ENCODE measurements at regions of chr3 and their contacts with region 1.

Region 1: DNA sequence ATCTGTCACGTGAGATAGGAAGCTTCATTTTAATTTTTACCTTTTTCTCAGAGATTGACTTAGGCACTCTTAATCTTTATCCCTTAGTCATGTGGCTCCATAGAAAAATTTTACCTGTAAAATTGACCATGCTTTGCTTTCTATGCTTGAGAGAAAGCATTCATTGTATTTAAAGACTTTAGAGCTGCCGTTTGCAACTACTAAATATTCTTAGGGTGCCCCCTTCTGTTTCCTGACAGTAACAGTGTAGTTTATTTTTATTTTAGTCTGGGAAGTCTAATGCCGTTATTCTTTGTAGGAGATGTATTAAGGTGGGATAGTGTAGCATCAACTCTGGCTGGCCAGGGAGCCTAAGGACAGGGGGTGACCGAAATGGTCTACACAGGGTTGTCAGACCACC is 84.5 kb upstream of the SYNPR start:
- DNase-seq: no peak
- H3K4me3 ChIP-seq: no peak overlapping the region
- H3K27ac ChIP-seq: no peak overlapping the region
- H3K4me1 ChIP-seq: no peaks in the 10 kb centered on the region
- H3K27me3 ChIP-seq: no peaks in the 10 kb centered on the region
- CTCF ChIP-seq: peak; percentile 38 to 62 (median 53)
- EP300 ChIP-seq: no peak
- POLR2A ChIP-seq: no peak

Region 2: DNA sequence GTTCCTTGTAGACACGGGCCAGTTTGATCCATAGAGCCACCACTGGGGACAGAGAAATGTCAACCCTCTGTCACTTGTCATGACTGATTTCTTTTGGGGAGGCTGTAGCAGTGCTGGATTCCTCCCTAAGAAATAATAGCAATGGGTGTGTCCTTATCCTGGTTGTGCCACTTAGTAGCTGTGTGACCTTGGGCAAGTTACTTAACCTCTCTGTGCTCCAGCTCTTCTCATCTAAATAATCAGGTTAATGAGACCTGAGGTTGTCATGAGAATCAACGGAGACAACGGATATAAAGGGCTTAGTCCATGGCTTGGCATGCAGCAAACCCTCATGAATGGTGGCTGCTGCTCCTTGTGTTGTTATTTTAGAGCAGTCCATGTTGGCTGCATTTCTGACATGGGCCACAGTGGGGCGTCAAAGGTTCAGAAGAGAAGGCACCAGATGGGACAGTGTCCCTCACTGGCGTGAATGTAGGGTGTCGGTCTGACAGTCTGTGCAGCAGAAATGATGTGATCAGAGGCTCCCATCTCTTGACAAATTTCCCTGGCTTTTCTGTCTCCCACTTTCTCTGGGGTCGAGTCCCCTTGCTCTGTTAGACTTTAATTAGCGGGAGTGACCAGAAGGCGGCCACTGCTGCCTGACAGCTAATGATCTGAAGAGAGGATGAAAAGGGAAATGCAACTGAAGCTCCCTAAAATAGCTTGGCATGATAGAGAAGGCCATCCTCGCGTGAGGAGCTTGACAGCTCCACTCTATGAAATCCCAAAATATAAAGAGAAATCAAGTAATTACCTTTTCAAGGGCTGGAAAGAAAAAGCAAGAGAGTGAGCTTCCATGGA is 527.8 kb before region 1 on chr3:
- in situ Hi-C with region 1: loop called (anchors 5 to 25 kb)
- intact Hi-C with region 1: no loop called
- DNase-seq: peak; percentile 83
- H3K4me3 ChIP-seq: no peak overlapping the region
- H3K27ac ChIP-seq: no peak overlapping the region
- H3K4me1 ChIP-seq: no peaks in the 10 kb centered on the region
- H3K27me3 ChIP-seq: no peaks in the 10 kb centered on the region
- CTCF ChIP-seq: peak; percentile 56 to 83 (median 69)
- EP300 ChIP-seq: no peak
- POLR2A ChIP-seq: no peak

Region 3: GRCh38 chr3:62876064-62876463 is 317.6 kb before region 1 on chr3:
- in situ Hi-C with region 1: loop called in 3 of 4 experiments (anchors 25 kb)
- intact Hi-C with region 1: no loop called
- DNase-seq: peak; percentile 44
- H3K4me3 ChIP-seq: no peak overlapping the region
- H3K27ac ChIP-seq: no peak overlapping the region
- H3K4me1 ChIP-seq: peaks cover 0 to 14% (median 12%) of the 10 kb centered on the region in 4 donors
- H3K27me3 ChIP-seq: peaks cover 53% of the 10 kb centered on the region
- CTCF ChIP-seq: no peak
- EP300 ChIP-seq: no peak
- POLR2A ChIP-seq: no peak

Region 4: DNA sequence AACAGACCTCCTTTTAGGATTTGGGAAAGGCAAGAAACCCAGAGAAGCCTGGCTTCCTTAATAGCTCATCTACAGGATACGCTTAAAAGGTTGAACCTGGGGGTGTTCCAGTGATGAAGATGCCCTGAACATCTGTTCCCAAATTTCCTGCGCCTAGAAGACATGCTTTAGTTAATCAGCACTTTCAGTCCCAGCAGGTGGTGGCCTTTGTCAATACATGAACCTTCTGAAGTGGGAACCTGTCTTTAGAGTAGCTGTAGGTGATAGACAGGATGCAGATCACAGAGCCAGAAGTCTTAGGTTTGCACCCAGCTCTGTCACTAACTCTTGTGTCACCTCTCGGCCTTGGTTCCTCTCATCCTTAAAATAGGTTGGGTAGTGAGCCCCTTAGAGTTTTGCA is 65.2 kb before region 1 on chr3:
- in situ Hi-C with region 1: no loop called
- intact Hi-C with region 1: no loop called
- DNase-seq: no peak
- H3K4me3 ChIP-seq: no peak overlapping the region
- H3K27ac ChIP-seq: no peak overlapping the region
- H3K4me1 ChIP-seq: no peaks in the 10 kb centered on the region
- H3K27me3 ChIP-seq: no peaks in the 10 kb centered on the region
- CTCF ChIP-seq: no peak
- EP300 ChIP-seq: no peak
- POLR2A ChIP-seq: no peak